ENCODE measurements at regions of chr7 and their contacts with region 1.

Region 1: DNA sequence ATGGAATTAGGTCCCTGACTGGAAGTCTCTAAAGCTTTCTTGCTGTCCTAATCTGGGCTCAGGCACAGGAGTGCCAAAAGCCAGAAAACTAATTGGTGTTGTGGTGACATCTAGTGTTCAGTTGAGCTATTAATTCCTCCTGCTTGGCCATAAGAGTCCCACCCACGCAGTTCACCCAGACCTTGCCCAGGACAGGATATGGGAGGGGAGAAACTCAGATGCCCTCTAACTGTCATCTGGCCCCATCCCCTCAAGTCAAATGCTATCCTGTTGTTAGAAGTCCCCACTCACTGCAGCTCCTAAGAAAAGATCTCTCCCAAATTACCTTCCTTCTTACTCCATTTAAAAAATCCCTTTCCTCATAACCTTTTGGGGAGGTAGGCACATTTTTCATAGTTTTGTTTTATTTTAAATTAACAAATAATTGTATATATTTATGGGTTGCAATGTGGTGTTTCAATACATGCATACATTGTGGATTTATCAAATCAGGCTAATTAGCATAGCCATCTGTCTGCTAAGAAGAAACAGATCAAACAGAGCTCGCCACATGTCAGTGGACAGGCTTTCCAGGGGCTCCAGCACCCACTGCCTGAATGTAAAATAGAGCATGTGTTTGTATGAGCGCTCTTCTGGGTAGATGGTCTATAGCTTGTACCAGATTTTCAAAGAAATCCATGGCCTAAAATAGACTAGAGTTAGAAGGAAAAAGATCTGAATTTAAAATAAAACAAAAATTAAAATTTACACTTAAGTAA is 84.0 kb downstream of the GSAP start:
- DNase-seq: peak; percentile 74
- H3K4me3 Mint-ChIP-seq: no peak overlapping the region
- H3K27ac Mint-ChIP-seq: no peak overlapping the region
- H3K4me1 Mint-ChIP-seq: peaks cover 44% of the 10 kb centered on the region
- H3K27me3 Mint-ChIP-seq: no peaks in the 10 kb centered on the region

Region 2: DNA sequence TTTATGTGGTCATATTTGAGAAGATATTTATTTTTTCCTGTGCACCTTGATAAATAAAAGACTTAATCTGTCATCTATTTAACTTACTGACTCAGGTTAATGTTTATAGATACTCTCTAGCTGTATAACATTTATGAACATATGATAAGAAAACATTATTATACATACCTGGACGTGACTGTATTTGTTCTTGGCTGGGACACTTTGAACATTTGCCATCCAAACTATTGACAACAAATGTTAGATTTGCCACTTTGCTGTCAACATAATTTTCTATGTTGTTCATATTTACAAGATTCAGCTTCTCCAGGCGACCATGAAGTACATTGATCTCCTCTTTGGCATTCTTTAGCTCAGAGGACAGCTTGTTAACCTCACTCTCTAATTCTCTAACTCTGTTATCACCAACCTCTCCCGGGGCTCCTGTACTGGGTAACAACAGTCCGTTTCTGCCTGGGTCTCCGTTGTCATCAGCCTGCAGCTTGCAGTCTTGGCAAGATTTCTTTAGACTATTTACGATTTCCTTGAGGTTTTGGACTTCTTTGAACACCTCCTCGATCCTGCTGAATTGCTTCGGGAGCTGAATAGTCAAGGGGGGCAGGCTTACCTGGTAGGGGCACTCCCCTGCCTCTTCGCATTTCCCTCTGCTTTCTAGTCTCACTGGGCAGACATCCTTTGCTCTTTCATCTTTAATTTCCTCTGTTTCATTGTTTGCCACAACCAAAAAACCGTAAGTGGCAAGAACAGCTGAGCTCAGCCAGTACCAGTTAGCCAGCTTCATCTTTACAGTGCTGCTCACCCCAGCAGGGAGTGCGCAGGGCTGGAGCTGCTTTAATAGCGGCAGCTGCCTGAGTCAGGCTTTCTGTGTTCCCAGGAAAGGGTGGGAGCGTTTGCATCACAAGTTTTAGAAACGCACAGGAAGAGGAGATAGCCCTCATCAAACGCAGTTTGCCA is 132.8 kb before region 1 on chr7 and contains the start of gene FGL2:
- CTCF ChIA-PET with region 1: interaction called, 3 read pairs
- intact Hi-C with region 1: loop called (anchors 2 kb)
- DNase-seq: peak; percentile 47
- H3K4me3 Mint-ChIP-seq: peak within 1 kb of the TSS; percentile 74
- H3K27ac Mint-ChIP-seq: no peak within 1 kb of the TSS
- H3K4me1 Mint-ChIP-seq: peaks cover 19% of the 10 kb centered on the region
- H3K27me3 Mint-ChIP-seq: no peaks in the 10 kb centered on the region
- total RNA-seq, gene FGL2: not detected

Region 3: DNA sequence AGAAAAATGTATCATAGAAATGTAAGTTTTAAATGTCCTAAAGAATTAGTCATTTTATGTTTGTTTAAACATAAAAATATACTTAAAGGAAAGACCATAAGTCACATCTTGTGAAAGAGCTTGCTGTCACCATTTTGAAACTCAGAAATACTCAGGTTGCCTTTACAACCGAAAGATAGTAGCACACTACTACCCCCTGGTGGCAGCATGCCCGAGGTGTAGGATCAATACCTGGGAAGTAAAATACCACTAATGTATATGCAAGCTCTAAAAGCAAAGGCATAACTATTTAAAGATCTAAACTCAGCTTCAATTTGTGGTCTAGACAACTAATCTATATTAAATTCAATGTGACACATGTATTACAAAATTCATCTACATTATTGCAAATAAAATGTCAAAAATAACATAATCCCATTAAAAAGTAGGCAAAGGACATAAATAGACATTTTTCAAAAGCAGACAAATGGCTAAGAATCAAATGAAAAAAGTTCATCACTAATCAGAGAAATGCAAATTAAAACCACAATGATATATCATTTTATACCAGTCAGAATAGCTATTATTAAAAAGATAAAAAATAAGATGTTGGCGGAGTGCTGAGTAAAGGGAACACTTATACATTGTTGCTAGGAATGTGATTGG is 84.8 kb before region 1 on chr7:
- CTCF ChIA-PET with region 1: interaction called, 50 read pairs
- intact Hi-C with region 1: loop called (anchors 1 kb)
- DNase-seq: peak; percentile 95
- H3K4me3 Mint-ChIP-seq: no peak overlapping the region
- H3K27ac Mint-ChIP-seq: no peak overlapping the region
- H3K4me1 Mint-ChIP-seq: peaks cover 2% of the 10 kb centered on the region
- H3K27me3 Mint-ChIP-seq: no peaks in the 10 kb centered on the region

Region 4: DNA sequence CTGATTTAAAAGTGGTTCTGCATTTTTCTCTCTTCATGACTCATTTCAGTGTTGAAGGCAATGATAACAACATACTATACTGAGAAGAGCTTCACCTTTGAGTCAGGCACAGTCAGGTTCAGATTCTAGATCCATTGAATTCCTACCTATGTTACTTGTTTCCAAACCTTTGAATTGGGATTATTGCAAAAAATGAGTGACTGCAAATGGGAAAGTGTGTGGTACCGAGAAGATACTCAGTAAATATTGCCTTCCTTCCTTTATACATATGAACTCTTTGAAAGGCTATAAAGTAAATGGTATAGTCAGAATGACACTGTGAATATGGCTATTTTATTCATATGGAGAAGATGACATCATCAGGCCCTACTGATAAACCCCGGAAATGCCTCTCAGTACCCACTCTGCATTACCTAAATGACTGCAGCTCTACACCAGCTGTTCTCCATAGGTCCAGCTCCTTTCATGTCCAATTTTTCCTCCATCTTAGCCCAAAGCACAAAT is 65.8 kb before region 1 on chr7:
- CTCF ChIA-PET with region 1: interaction called, 3 read pairs
- intact Hi-C with region 1: loop called (anchors 1 kb)
- DNase-seq: peak; percentile 49
- H3K4me3 Mint-ChIP-seq: no peak overlapping the region
- H3K27ac Mint-ChIP-seq: peak overlapping the region; percentile 50
- H3K4me1 Mint-ChIP-seq: peaks cover 13% of the 10 kb centered on the region
- H3K27me3 Mint-ChIP-seq: no peaks in the 10 kb centered on the region

Region 5: GRCh38 chr7:77293046-77293445 is 39.1 kb before region 1 on chr7:
- CTCF ChIA-PET with region 1: interaction called, 5 read pairs
- intact Hi-C with region 1: loop called (anchors 2 kb)
- DNase-seq: no peak
- H3K4me3 Mint-ChIP-seq: no peak overlapping the region
- H3K27ac Mint-ChIP-seq: no peak overlapping the region
- H3K4me1 Mint-ChIP-seq: no peaks in the 10 kb centered on the region
- H3K27me3 Mint-ChIP-seq: no peaks in the 10 kb centered on the region

Region 6: DNA sequence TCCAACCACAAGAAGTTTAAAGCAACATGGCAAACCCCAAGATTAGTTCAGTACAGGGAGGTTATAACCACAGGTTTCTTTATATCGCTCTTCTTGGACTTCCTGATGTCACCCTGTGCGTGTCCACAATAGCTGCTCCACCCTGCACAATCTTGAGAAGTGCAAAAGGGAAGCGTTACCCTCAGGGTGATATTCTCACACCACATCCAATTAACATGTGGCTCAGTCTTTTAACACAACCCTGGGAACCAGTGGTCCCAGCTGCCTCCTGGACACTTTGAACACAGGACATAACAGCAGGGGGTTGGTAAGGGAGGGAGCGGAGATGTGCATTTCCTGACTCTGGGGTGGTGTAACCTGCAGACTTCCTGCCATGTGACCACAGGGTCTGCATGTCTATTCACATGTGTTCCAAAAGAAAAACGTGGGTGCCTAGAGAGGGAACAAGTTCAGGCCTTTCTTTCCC is 19.5 kb after region 1 on chr7:
- CTCF ChIA-PET with region 1: interaction called, 7 read pairs
- intact Hi-C with region 1: loop called (anchors 1 kb)
- DNase-seq: peak; percentile 54
- H3K4me3 Mint-ChIP-seq: peak overlapping the region; percentile 51
- H3K27ac Mint-ChIP-seq: peak overlapping the region; percentile 37
- H3K4me1 Mint-ChIP-seq: peaks cover 55% of the 10 kb centered on the region
- H3K27me3 Mint-ChIP-seq: no peaks in the 10 kb centered on the region

Measured in activated naive CD4-positive, alpha-beta T cell treated with anti-CD3 and anti-CD28 coated beads for 36 hours (primary cell).